HepG2 (cell line): ENCODE measurements at regions of chr4 and their contacts with region 1.

Region 1: GRCh38 chr4:22454955-22455354 is 60.9 kb downstream of the ADGRA3 start:
- DNase-seq: no peak
- ATAC-seq: no peak
- H3K4me3 ChIP-seq: no peak overlapping the region
- H3K27ac ChIP-seq: peak overlapping the region; percentile 84
- H3K4me1 ChIP-seq: peaks cover 69% of the 10 kb centered on the region
- H3K27me3 ChIP-seq: no peaks in the 10 kb centered on the region
- CTCF ChIP-seq: no peak
- EP300 ChIP-seq: no peak
- POLR2A ChIP-seq: no peak
- RAD21 ChIP-seq: no peak

Region 2: GRCh38 chr4:22490718-22491315 is 35.9 kb after region 1 on chr4:
- CTCF ChIA-PET with region 1: no interaction called
- POLR2A ChIA-PET with region 1: interaction called, 4 read pairs
- in situ Hi-C with region 1: no loop called
- intact Hi-C with region 1: loop called (anchors 1 kb)
- DNase-seq: peak; percentile 45
- ATAC-seq: peak; percentile 88
- H3K4me3 ChIP-seq: no peak overlapping the region
- H3K27ac ChIP-seq: peak overlapping the region; percentile 49
- H3K4me1 ChIP-seq: peaks cover 69% of the 10 kb centered on the region
- H3K27me3 ChIP-seq: no peaks in the 10 kb centered on the region
- CTCF ChIP-seq: no peak
- EP300 ChIP-seq: no peak
- POLR2A ChIP-seq: no peak
- RAD21 ChIP-seq: no peak

Region 3: DNA sequence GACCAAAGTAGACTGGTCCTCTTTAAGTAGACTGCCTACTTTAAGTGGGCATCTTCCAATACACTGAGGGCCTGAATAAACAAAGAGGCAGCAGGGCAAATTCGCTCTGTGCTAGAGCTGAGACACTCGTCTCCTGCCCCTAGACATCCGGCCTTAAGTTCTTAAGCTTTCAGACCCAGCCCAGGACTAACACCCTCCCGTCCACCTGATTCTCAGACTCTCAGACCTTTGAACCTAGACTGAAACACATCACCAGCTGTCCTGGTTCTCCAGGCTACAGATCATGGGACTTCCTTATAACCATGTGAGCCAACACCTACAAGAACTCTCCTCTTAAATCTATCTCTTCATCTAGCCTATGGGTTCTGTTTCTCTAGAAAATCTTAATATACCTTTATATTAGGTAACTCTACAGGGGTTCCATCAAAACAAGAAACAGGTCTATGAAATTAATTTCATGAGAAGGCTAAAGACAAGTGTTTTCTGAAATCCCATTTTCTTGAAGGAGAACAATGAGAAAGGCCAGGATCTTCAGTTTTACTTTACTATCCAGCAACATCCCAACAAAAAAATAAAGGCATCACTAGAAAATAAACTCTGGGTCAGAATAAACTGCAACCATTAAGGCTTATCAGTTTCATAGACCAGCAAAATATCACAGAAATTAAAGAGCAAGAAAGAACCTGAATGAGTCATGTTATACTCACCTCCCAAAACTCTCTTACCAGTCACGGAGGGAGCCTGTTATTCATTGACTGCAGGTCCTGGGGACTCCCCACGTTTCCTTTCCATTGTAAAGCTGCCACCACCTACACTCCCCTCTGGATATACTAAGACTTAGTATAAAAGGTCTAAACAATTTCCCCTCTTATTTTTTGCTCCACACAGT is 46.1 kb after region 1 on chr4:
- CTCF ChIA-PET with region 1: no interaction called
- POLR2A ChIA-PET with region 1: no interaction called
- in situ Hi-C with region 1: no loop called
- intact Hi-C with region 1: no loop called
- DNase-seq: no peak
- ATAC-seq: no peak
- H3K4me3 ChIP-seq: no peak overlapping the region
- H3K27ac ChIP-seq: no peak overlapping the region
- H3K4me1 ChIP-seq: peaks cover 25% of the 10 kb centered on the region
- H3K27me3 ChIP-seq: no peaks in the 10 kb centered on the region
- CTCF ChIP-seq: no peak
- EP300 ChIP-seq: no peak
- POLR2A ChIP-seq: no peak
- RAD21 ChIP-seq: no peak